HEK293T (cell line): ENCODE measurements at regions of chr17 and their contacts with region 1.

Region 1: DNA sequence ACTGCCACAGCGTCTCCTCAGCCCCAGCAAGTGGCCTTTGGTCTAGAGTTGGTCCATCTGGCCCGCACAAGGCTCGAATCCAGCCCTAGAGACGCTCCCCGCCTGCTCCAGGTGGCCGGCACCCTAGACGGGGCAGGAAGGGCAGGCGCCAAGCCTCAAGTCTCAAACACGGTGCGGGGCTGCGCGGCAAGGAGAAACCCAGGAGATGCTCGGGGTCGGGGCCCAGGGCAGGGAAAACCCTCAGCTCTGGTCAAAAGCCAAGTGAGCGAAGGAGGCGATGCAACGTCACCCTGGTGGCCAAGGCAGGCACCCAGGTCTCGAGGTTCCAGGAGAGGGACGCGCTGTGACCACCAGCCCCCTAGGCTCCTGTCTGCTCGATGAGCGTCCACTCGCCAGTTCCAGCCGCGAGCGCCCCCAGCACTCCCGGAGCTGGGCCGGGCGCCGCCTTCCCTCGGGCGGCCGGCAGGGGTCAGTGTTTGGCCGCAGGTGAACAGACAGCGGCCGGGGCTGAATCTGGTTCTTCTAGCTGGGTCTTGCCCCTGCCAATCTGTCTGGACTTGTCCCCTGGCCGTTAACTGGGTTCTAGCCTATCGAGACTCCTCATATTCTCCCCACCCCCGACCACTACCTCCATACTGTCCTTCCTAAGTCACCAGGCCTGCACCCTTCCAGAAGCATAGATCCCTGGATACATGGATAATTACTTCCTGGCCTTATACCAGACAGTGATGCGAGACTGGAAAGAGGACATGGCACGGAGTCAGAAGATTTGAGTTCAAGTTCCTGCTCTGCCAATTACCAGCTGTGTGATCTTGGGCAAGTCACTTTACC is 44.0 kb downstream of the PRAC1 start:
- DNase-seq: peak; percentile 89

Region 2: GRCh38 chr17:48646183-48647102 is 31.9 kb before region 1 on chr17:
- CTCF ChIA-PET with region 1: no interaction called
- POLR2A ChIA-PET with region 1: no interaction called
- DNase-seq: peak; percentile 32

Region 3: DNA sequence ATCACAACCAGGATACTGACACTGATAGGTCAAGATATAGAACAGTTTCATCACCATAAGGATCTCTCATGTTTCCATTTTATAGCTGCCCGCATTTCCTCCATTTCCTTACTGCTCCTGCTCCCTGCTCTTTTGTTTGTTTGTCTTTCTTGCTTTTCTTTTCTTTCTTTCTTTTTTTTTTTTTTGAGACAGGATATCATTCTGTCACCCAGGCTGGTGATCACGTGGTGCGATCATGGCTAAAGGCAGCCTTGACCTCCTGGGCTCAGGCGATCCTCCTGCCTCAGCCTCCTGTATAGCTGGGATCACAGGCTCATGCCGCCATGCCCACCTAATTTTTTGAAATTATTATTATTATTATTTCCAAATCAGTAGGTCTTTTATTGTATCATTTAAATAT is 12.3 kb after region 1 on chr17:
- CTCF ChIA-PET with region 1: interaction called, 11 read pairs
- POLR2A ChIA-PET with region 1: no interaction called
- DNase-seq: no peak

Region 4: GRCh38 chr17:48718761-48719641 is 40.6 kb after region 1 on chr17:
- CTCF ChIA-PET with region 1: interaction called, 19 read pairs
- POLR2A ChIA-PET with region 1: interaction called, 12 read pairs
- DNase-seq: no peak

Region 5: GRCh38 chr17:48791128-48792032 is 113.0 kb after region 1 on chr17:
- CTCF ChIA-PET with region 1: interaction called, 82 read pairs
- POLR2A ChIA-PET with region 1: interaction called, 10 read pairs
- DNase-seq: peak; percentile 81